ENCODE measurements at regions of chr17 and their contacts with region 1.

Region 1: DNA sequence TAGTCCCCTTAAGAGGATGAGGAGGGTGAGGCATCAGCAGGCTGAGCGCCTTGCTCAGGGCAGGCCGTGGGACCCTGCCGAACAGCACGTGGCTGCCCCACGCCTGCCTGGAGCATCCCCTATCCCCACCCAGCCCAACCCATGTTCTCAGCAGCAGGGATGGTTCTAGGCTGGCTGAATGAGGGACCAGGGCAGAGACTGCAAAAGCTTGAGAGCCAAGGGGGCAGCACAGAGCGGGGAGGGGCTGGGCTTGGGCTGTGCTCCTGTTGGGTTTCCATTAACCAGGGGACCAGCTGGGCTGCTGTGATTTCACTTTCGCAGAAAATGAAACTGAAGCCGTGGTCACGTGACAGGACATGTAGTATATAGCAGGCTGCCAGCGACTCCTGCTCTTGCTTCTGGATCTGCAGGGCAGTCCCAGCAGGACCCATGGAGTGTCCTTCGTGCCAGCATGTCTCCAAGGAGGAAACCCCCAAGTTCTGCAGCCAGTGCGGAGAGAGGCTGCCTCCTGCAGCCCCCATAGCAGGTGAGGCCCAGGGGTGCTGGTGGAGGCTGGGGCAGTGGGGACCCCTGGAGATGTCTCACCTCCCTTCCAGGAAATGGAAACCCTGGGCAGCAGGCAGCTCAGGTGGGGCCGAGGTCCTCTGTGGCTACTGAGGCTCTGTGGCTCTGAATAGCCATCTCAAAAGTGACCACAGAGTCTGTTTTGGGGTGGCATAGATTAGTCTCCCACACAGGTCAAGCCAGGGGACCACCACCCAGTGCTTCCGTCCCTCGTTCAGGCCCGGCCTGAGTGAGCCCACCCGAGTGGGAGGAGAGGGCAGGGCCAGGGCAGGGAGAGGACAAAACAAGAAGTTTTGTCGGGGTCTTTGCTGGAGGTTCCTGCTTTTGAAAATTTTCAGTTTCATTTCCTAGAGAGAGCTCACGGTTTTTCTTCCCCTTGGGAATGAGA is 2.9 kb downstream of the RNF213 start:
- DNase-seq: peak; percentile 80 to 93 (median 90)
- H3K4me3 ChIP-seq: peak overlapping the region; percentile 68 to 99 (median 74)
- H3K4me3 Mint-ChIP-seq: peak overlapping the region; percentile 88 to 99
- H3K27ac ChIP-seq: peak overlapping the region; percentile 87 to 94
- H3K27ac Mint-ChIP-seq: peak overlapping the region; percentile 86 to 98 (median 96)
- H3K4me1 ChIP-seq: peaks cover 40 to 62% of the 10 kb centered on the region in 2 donors
- H3K4me1 Mint-ChIP-seq: peaks cover 58% of the 10 kb centered on the region
- H3K27me3 ChIP-seq: no peaks in the 10 kb centered on the region
- H3K27me3 Mint-ChIP-seq: peaks cover 6 to 16% (median 8%) of the 10 kb centered on the region in 3 donors
- CTCF ChIP-seq: no peak

Region 2: GRCh38 chr17:80092959-80093358 is 170.6 kb before region 1 on chr17:
- intact Hi-C with region 1: loop called in 1 of 2 experiments (anchors 5 kb)
- DNase-seq: peak; percentile 88 to 94 (median 92)
- H3K4me3 ChIP-seq: peak overlapping the region in 1 of 3 experiments; percentile 48
- H3K4me3 Mint-ChIP-seq: peak overlapping the region; percentile 16 to 74
- H3K27ac ChIP-seq: peak overlapping the region; percentile 83 to 94
- H3K27ac Mint-ChIP-seq: peak overlapping the region; percentile 92 to 99 (median 98)
- H3K4me1 ChIP-seq: peaks cover 37 to 42% of the 10 kb centered on the region in 2 donors
- H3K4me1 Mint-ChIP-seq: peaks cover 42% of the 10 kb centered on the region
- H3K27me3 ChIP-seq: no peaks in the 10 kb centered on the region
- H3K27me3 Mint-ChIP-seq: peaks cover 3 to 8% (median 4%) of the 10 kb centered on the region in 3 donors
- CTCF ChIP-seq: no peak

Region 3: DNA sequence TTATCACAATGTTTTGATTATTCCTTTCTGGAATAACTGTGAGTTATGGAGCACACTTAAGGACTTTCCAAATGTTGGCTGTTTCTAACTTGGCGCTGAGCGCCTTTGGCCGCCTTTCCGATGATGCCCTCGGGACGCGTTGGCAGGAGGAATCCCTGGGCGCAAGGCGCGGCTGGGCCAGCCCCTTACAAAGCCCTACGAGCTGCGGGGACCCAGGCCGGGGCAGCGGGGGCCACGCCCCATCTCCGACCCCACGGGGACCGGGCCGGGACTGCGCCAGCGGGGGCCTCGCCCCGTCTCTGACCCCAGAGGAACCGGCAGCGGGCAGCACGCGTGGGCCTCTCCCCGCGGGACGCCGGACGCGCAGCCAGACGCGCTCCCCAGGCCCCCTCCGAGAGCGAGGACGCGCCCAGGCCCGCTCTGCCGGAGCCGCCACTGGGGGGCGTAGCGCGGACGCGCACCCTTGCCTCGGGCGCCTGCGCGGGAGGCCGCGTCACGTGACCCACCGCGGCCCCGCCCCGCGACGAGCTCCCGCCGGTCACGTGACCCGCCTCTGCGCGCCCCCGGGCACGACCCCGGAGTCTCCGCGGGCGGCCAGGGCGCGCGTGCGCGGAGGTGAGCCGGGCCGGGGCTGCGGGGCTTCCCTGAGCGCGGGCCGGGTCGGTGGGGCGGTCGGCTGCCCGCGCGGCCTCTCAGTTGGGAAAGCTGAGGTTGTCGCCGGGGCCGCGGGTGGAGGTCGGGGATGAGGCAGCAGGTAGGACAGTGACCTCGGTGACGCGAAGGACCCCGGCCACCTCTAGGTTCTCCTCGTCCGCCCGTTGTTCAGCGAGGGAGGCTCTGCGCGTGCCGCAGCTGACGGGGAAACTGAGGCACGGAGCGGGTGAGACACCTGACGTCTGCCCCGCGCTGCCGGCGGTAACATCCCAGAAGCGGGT is 162.3 kb before region 1 on chr17 and contains the start of gene GAA:
- intact Hi-C with region 1: loop called in 1 of 2 experiments (anchors 5 kb)
- DNase-seq: peak; percentile 80 to 86 (median 82)
- H3K4me3 ChIP-seq: peak within 1 kb of the TSS; percentile 80 to 96 (median 91)
- H3K4me3 Mint-ChIP-seq: peak within 1 kb of the TSS; percentile 93 to 96
- H3K27ac ChIP-seq: peak within 1 kb of the TSS; percentile 87 to 94
- H3K27ac Mint-ChIP-seq: peak within 1 kb of the TSS; percentile 91 to 96 (median 95)
- H3K4me1 ChIP-seq: peaks cover 23 to 27% of the 10 kb centered on the region in 2 donors
- H3K4me1 Mint-ChIP-seq: peaks cover 34% of the 10 kb centered on the region
- H3K27me3 ChIP-seq: no peaks in the 10 kb centered on the region
- H3K27me3 Mint-ChIP-seq: peaks cover 0 to 2% (median 1%) of the 10 kb centered on the region in 3 donors
- CTCF ChIP-seq: peak; percentile 88
- polyA plus RNA-seq, gene GAA: 116 to 140 (median 120) TPM

Region 4: GRCh38 chr17:80147035-80147836 is 116.3 kb before region 1 on chr17 and contains the start of gene EIF4A3:
- intact Hi-C with region 1: loop called (anchors 5 kb)
- DNase-seq: peak; percentile 98 to 99 (median 99)
- H3K4me3 ChIP-seq: peak within 1 kb of the TSS; percentile 70 to 93 (median 88)
- H3K4me3 Mint-ChIP-seq: peak within 1 kb of the TSS; percentile 81 to 95
- H3K27ac ChIP-seq: peak within 1 kb of the TSS; percentile 70 to 89
- H3K27ac Mint-ChIP-seq: peak within 1 kb of the TSS; percentile 87 to 97 (median 93)
- H3K4me1 ChIP-seq: peaks cover 33 to 42% of the 10 kb centered on the region in 2 donors
- H3K4me1 Mint-ChIP-seq: peaks cover 39% of the 10 kb centered on the region
- H3K27me3 ChIP-seq: no peaks in the 10 kb centered on the region
- H3K27me3 Mint-ChIP-seq: peaks cover 0 to 2% (median 0%) of the 10 kb centered on the region in 3 donors
- CTCF ChIP-seq: no peak
- polyA plus RNA-seq, gene EIF4A3: 101 to 180 (median 106) TPM

Region 5: DNA sequence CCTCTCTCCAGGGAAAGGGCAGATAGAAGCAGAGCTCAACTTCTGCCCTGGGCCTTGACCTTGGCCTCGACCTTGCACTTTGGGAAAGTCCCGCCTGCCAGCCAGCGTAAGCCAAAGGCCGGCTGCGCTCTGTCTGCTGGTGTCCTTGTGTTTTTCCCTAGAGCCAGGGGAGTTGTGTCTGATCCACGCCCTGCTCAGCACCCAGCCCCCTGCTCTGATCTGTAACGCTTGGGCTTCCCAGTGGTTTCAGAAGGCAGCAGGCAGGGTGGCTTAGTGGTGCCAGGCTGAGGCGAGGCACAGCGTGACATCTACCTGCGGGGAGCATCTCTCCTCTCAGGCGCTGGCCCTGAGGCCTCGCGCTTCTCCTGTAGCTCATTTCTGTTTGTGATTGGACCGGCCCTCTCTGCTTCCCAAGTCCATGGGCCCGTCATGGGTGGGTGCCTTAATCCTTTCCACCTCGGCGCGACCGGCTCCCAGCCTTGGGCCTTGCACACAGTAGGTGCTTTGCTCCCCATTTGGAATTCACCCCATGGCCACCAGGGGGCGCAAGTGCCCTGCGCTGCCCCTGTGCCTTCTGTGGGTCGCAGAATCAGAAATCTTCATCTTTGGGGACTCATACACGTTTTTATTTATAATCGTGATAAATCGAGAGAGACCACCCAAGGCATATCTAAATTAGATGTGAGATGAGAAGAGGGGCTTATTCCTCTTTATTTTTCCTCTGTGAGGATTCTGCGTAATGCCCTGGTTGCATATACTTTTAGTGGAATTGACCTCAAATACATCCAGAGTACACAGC is 67.6 kb before region 1 on chr17:
- intact Hi-C with region 1: loop called in 1 of 2 experiments (anchors 5 kb)
- DNase-seq: peak; percentile 33 to 63 (median 59)
- H3K4me3 ChIP-seq: no peak overlapping the region
- H3K4me3 Mint-ChIP-seq: no peak overlapping the region
- H3K27ac ChIP-seq: no peak overlapping the region
- H3K27ac Mint-ChIP-seq: peak overlapping the region in 2 of 7 donors; percentile 49 to 75
- H3K4me1 ChIP-seq: no peaks in the 10 kb centered on the region
- H3K4me1 Mint-ChIP-seq: no peaks in the 10 kb centered on the region
- H3K27me3 ChIP-seq: no peaks in the 10 kb centered on the region
- H3K27me3 Mint-ChIP-seq: peaks cover 11 to 29% (median 24%) of the 10 kb centered on the region in 3 donors
- CTCF ChIP-seq: peak; percentile 100

Region 6: GRCh38 chr17:80219013-80219762 is 44.3 kb before region 1 on chr17:
- intact Hi-C with region 1: loop called (anchors 5 kb)
- DNase-seq: peak; percentile 96 to 98 (median 98)
- H3K4me3 ChIP-seq: peak overlapping the region; percentile 58 to 95 (median 86)
- H3K4me3 Mint-ChIP-seq: peak overlapping the region; percentile 91 to 93
- H3K27ac ChIP-seq: peak overlapping the region; percentile 99
- H3K27ac Mint-ChIP-seq: peak overlapping the region; percentile 93 to 99 (median 97)
- H3K4me1 ChIP-seq: peaks cover 29 to 44% of the 10 kb centered on the region in 2 donors
- H3K4me1 Mint-ChIP-seq: peaks cover 35% of the 10 kb centered on the region
- H3K27me3 ChIP-seq: peaks cover 3 to 25% of the 10 kb centered on the region in 2 donors
- H3K27me3 Mint-ChIP-seq: peaks cover 34 to 63% (median 44%) of the 10 kb centered on the region in 3 donors
- CTCF ChIP-seq: no peak

Region 7: DNA sequence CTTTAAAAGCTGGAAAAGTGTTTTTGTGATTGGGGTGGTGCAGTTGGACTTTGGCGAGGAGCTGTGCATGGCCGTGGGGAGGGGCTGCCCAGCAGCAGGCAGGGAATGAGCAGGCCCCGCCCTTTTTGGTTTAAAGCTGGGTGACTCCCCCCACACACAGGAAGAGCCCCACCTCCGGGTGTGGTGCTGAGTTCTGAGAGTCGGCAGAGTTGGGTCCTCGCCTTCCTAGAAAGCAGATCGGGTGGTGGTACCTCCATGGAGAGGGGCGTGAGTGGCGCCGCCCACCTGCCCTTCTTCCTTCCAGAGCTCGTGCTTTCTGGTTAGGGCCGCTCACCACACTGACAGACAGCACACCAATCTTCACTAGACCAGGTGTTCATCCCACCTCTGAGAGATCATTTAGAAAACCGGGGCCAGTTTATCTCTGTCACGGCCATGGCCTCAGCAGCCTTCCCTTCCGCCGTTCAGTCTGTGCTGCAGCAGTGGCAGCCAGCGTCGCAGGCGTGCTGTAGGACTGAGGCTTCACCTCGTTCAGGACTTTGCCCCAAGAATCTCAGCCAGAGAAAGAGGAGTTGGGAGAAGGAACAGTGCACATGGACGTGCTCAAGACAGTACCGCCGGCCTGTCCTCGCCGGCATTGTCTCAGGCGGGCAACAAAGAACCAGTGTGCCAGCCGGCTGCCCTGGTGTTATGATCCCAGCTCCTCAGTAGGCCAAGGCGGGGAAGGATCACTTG is 584.1 kb after region 1 on chr17:
- intact Hi-C with region 1: no loop called
- DNase-seq: no peak
- H3K4me3 ChIP-seq: no peak overlapping the region
- H3K4me3 Mint-ChIP-seq: no peak overlapping the region
- H3K27ac ChIP-seq: no peak overlapping the region
- H3K27ac Mint-ChIP-seq: peak overlapping the region in 2 of 7 donors; percentile 4 to 43
- H3K4me1 ChIP-seq: no peaks in the 10 kb centered on the region
- H3K4me1 Mint-ChIP-seq: peaks cover 4% of the 10 kb centered on the region
- H3K27me3 ChIP-seq: no peaks in the 10 kb centered on the region
- H3K27me3 Mint-ChIP-seq: peaks cover 0 to 3% (median 0%) of the 10 kb centered on the region in 3 donors
- CTCF ChIP-seq: no peak

Measured in CD14-positive monocyte (primary cell).